A549 (cell line): ENCODE measurements at regions of chr4 and their contacts with region 1.

Region 1: GRCh38 chr4:3480528-3481112 is 17.5 kb downstream of the DOK7 start:
- DNase-seq: peak; percentile 47 to 67
- ATAC-seq: peak; percentile 37 to 85
- H3K4me3 ChIP-seq: no peak overlapping the region
- H3K27ac ChIP-seq: peak overlapping the region in 1 of 2 experiments; percentile 60; a peak in 2 of 6 replicates
- H3K4me1 ChIP-seq: peaks cover 33% of the 10 kb centered on the region
- CTCF ChIP-seq: peak; percentile 67
- EP300 ChIP-seq: no peak
- POLR2A ChIP-seq: no peak
- RAD21 ChIP-seq: peak; percentile 67 to 71

Region 2: GRCh38 chr4:3193531-3194203 is 287.0 kb before region 1 on chr4:
- CTCF ChIA-PET with region 1: interaction called, 27 read pairs
- POLR2A ChIA-PET with region 1: no interaction called
- DNase-seq: no peak
- ATAC-seq: no peak
- H3K4me3 ChIP-seq: no peak overlapping the region
- H3K27ac ChIP-seq: no peak overlapping the region
- H3K4me1 ChIP-seq: no peaks in the 10 kb centered on the region
- CTCF ChIP-seq: peak; percentile 44
- EP300 ChIP-seq: no peak
- POLR2A ChIP-seq: no peak
- RAD21 ChIP-seq: peak in 1 of 2 experiments; percentile 26; a peak in 3 of 5 replicates

Region 3: GRCh38 chr4:3355266-3355748 is 125.3 kb before region 1 on chr4:
- CTCF ChIA-PET with region 1: interaction called, 11 read pairs
- POLR2A ChIA-PET with region 1: no interaction called
- DNase-seq: no peak
- ATAC-seq: no peak
- H3K4me3 ChIP-seq: no peak overlapping the region
- H3K27ac ChIP-seq: no peak overlapping the region
- H3K4me1 ChIP-seq: 0 out of 3 replicates have a peak, but pooled peaks cover 4% of the 10 kb centered on the region
- CTCF ChIP-seq: no peak
- EP300 ChIP-seq: no peak
- POLR2A ChIP-seq: no peak
- RAD21 ChIP-seq: no peak

Region 4: GRCh38 chr4:3470244-3471097 is 10.1 kb before region 1 on chr4:
- CTCF ChIA-PET with region 1: interaction called, 27 read pairs
- POLR2A ChIA-PET with region 1: no interaction called
- DNase-seq: no peak
- ATAC-seq: no peak
- H3K4me3 ChIP-seq: no peak overlapping the region
- H3K27ac ChIP-seq: no peak overlapping the region
- H3K4me1 ChIP-seq: no peaks in the 10 kb centered on the region
- CTCF ChIP-seq: no peak
- EP300 ChIP-seq: no peak
- POLR2A ChIP-seq: no peak
- RAD21 ChIP-seq: no peak

Region 5: DNA sequence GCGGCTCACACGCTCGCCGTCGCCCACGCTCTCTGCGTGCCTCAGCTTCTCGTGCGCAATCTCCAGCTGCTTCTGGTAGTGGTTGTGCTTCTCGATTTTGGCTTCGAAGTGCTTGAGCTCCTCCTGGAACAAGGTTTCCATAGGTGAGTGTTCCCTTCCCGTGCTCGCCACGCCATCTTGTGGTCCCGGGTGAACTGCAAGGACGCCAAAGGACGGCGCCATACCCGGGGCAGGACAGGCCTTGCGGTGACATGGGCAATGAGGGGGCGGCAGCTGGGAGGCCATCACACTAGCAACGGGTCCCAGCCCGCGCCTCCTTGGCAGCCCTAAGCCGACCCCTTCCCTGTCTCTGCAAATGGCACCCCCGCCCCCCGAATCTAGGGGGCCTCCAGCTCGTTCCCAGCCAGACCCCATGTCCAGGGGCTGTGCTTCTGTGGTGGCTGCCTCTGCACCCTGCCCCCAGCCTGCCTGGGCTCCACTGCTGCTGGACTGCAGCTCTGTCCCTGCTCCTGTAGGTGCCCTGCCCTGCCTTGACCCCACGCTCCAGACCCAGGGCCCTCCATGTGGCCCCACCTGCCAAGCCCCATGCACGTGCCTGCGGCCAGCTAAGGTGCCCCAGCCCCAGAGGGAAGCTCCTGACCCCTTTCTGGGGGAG is 34.3 kb after region 1 on chr4:
- CTCF ChIA-PET with region 1: interaction called, 14 read pairs
- POLR2A ChIA-PET with region 1: no interaction called
- DNase-seq: peak in 1 of 2 experiments; percentile 20
- ATAC-seq: peak; percentile 68 to 78; a peak in 5 of 6 replicates
- H3K4me3 ChIP-seq: no peak overlapping the region
- H3K27ac ChIP-seq: no peak overlapping the region
- H3K4me1 ChIP-seq: no peaks in the 10 kb centered on the region
- CTCF ChIP-seq: peak; percentile 11; the same call in 1 of the 3 replicates
- EP300 ChIP-seq: no peak
- POLR2A ChIP-seq: no peak
- RAD21 ChIP-seq: no peak

Region 6: GRCh38 chr4:3647421-3647820 is 166.8 kb after region 1 on chr4:
- CTCF ChIA-PET with region 1: no interaction called
- POLR2A ChIA-PET with region 1: no interaction called
- DNase-seq: no peak
- ATAC-seq: no peak
- H3K4me3 ChIP-seq: no peak overlapping the region
- H3K27ac ChIP-seq: no peak overlapping the region
- H3K4me1 ChIP-seq: peaks cover 10% of the 10 kb centered on the region; the same call in 2 of the 3 replicates
- CTCF ChIP-seq: no peak
- EP300 ChIP-seq: no peak
- POLR2A ChIP-seq: no peak
- RAD21 ChIP-seq: no peak